Activated CD4-positive, alpha-beta memory T cell treated with anti-CD3 and anti-CD28 coated beads for 36 hours (primary cell): ENCODE measurements at regions of chr19 and their contacts with region 1.

Region 1: DNA sequence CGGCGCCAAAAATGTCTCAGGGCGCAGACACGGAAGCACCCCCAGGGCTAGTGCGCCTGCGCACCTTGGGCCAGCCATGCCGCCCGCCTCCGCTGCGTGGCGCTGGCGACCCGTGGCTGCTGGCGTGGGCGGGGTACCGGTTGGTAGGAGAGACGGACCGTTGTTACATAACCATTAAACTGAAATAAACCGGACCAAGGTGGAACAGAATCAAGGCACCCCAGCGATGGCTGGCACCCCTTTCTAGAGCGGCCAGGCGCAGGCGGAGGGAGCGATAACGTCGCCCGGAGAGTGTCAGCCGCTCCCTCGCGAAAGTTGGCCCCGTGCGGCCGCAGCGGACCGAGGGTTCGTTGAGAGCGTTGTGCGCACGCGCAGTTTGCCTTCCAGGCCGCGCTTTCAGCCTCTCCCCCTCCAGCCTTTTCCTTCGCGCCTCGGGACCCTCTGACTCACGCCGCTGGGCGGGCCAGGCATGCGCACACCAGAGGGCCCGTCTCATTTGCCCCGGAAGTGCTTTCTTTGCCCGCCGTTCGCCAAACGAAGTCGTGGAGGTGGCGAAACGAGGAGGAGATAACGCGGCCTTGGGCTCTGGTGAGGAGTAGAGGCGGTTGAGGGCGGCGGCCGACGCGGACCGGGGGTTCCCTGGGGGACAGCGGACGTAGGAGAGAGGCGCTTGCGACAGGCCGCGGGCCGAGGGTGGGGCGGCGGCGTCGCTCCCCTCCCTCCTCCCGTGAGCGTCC is at the starts of genes PLEKHJ1 and SF3A2:
- DNase-seq: peak; percentile 99
- H3K4me3 Mint-ChIP-seq: peak within 1 kb of the TSS; percentile 97
- H3K27ac Mint-ChIP-seq: peak within 1 kb of the TSS; percentile 95
- H3K4me1 Mint-ChIP-seq: peaks cover 59% of the 10 kb centered on the region
- H3K27me3 Mint-ChIP-seq: peaks cover 4% of the 10 kb centered on the region
- total RNA-seq, gene PLEKHJ1: 60.8 to 64.0 TPM
- total RNA-seq, gene SF3A2: 123 to 134 TPM

Region 2: DNA sequence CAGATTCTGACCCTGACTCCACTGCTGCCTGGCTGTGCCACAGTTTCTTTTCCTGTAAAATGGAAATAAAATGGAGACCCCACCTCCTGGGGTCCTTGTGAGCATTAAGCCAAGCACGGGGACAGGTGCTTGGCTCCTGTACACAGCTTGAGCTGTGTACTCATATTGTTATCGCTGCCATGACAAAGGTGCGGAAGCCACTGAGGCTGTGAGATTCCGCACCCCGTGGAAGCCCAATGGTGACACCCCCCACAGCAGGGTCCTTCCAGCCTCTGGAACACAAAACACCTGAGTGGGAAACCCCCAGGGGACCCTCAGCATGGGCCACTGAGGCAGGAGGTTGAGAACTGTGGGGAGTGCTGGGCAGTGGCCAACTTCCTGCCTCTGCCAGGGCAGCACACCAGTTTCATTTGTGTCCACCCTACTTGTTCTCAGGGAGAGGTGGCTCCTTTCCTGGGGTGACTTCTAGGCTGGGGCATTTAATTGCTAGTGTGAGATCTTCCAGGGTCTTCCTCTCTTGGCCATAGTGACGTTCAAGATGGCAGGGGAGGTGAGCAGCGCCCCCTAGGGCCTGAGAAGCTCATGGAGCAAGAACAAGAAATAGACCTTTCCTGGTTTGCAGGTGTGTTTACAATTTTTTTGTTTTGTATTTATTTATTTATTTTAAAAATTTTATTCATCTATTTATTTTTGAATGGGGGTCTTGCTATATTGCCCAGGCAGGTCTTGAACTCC is 25.1 kb after region 1 on chr19:
- CTCF ChIA-PET with region 1: interaction called, 58 read pairs
- POLR2A ChIA-PET with region 1: interaction called, 11 read pairs
- intact Hi-C with region 1: loop called (anchors 1 kb)
- DNase-seq: peak; percentile 82
- H3K4me3 Mint-ChIP-seq: no peak overlapping the region
- H3K27ac Mint-ChIP-seq: no peak overlapping the region
- H3K4me1 Mint-ChIP-seq: peaks cover 31% of the 10 kb centered on the region
- H3K27me3 Mint-ChIP-seq: no peaks in the 10 kb centered on the region

Region 3: DNA sequence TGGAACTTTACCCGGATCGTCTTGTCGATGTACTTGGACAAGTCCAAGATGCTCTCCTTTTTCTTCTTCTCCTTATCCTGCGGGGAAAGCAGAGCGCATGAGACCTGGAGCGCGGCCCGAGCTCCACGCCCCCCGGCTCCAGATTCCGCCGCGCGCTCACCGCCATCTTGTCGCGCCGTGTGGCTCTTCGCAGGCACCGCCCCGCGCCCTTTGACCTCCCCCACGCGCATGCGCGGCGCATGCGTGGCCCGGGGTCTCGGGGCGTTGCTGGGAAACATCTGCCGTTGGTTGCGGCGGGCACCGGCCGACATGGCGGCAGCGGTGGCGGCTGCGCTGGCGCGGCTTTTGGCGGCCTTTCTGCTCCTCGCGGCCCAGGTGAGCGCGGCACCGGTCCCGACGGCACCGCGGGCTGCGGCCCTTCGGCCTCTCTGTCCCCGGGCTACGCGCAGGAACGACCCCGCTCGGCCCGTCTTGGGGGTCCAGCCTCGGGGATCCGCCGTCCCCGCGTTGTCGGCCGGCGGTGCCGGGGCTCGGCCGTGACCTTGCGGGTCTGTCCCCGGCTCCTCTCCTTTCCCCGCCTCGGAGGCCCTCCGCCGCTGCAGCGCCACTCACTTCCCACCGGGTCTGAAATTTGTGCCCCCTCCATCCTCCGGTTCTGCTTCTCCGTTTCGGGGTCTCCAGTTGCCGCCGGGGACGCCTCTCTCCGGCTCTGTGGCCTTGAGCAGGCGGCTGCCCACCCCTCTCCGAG is 92.1 kb after region 1 on chr19 and contains the starts of genes LSM7 and SPPL2B:
- CTCF ChIA-PET with region 1: no interaction called
- POLR2A ChIA-PET with region 1: no interaction called
- intact Hi-C with region 1: loop called (anchors 1 kb)
- DNase-seq: peak; percentile 94
- H3K4me3 Mint-ChIP-seq: peak within 1 kb of the TSS; percentile 99
- H3K27ac Mint-ChIP-seq: peak within 1 kb of the TSS; percentile 94
- H3K4me1 Mint-ChIP-seq: peaks cover 53% of the 10 kb centered on the region
- H3K27me3 Mint-ChIP-seq: no peaks in the 10 kb centered on the region
- total RNA-seq, gene LSM7: 137 to 144 TPM
- total RNA-seq, gene SPPL2B: 43.8 TPM

Region 4: DNA sequence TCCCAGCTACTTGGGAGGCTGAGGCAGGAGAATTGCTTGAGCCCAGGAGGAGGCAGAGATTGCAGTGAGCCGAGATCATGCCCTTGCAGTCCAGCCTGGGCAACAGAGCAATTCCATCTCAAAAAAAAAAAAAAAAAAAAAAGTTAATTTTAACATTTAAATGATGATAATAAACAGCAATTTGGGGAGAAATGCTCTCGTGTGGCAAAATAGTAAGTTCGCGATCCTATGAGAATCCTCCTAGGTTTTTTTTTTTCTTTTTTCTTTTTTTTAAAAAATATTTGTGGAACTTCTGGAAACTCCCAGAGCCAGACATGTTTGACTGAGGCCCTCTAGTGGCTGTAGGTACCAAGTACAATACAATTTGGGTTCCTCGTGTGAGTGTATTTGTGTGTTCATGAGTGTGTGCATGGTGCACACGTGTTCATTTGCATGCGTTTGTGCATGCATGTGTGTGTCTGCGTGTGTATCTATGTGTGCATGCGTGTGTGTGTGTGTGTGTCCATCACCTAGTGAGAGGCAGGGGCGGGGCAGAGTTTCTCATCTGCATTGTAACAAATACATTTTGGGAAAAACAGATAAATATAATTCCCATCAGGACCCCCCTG is 154.7 kb after region 1 on chr19:
- CTCF ChIA-PET with region 1: interaction called, 3 read pairs
- POLR2A ChIA-PET with region 1: no interaction called
- intact Hi-C with region 1: loop called (anchors 1 kb)
- DNase-seq: peak; percentile 45
- H3K4me3 Mint-ChIP-seq: no peak overlapping the region
- H3K27ac Mint-ChIP-seq: no peak overlapping the region
- H3K4me1 Mint-ChIP-seq: peaks cover 10% of the 10 kb centered on the region
- H3K27me3 Mint-ChIP-seq: no peaks in the 10 kb centered on the region

Region 5: DNA sequence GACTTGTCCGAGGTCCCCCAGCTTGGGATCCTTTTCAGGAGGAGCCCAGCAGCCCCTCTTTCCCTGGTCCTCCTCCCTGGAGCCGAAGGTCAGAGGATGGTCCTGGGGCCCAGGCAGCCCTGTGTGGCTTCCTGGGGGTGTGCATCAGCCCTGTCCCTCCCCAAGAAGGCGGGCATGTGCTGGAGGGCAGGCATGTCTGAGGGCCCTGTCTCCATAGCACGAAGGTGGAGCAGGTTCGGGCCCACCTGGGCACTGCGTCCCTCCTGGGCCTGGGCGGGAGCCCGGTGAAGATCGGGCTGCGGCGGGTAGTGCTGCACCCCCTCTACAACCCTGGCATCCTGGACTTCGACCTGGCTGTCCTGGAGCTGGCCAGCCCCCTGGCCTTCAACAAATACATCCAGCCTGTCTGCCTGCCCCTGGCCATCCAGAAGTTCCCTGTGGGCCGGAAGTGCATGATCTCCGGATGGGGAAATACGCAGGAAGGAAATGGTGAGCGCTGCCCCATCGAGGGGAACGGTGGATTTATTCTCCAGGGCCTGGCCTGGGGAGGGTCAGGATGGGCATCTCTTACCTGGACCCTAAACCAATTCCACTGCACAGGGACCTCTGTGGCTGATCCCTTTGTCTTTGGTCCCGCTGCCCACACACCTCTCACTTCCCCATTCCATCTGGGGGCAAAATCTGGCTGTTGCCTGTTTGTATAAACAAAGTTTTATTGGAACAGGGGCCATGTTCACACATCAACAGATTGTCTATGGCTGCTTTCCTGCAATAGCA is 180.0 kb after region 1 on chr19:
- CTCF ChIA-PET with region 1: no interaction called
- POLR2A ChIA-PET with region 1: no interaction called
- intact Hi-C with region 1: no loop called
- DNase-seq: no peak
- H3K4me3 Mint-ChIP-seq: no peak overlapping the region
- H3K27ac Mint-ChIP-seq: no peak overlapping the region
- H3K4me1 Mint-ChIP-seq: no peaks in the 10 kb centered on the region
- H3K27me3 Mint-ChIP-seq: no peaks in the 10 kb centered on the region

Region 6: GRCh38 chr19:2427429-2428320 is 191.2 kb after region 1 on chr19 and contains the start of gene TIMM13:
- CTCF ChIA-PET with region 1: interaction called, 4 read pairs
- POLR2A ChIA-PET with region 1: no interaction called
- intact Hi-C with region 1: loop called (anchors 1 kb)
- DNase-seq: peak; percentile 97
- H3K4me3 Mint-ChIP-seq: peak within 1 kb of the TSS; percentile 90
- H3K27ac Mint-ChIP-seq: peak within 1 kb of the TSS; percentile 97
- H3K4me1 Mint-ChIP-seq: peaks cover 15% of the 10 kb centered on the region
- H3K27me3 Mint-ChIP-seq: no peaks in the 10 kb centered on the region
- total RNA-seq, gene TIMM13: 69.0 to 72.0 TPM